OCI-LY7 (cell line): ENCODE measurements at regions of chr14 and their contacts with region 1.

Region 1: GRCh38 chr14:65502676-65503124 is 90.2 kb downstream of the FUT8 start:
- DNase-seq: no peak
- H3K4me3 ChIP-seq: no peak overlapping the region
- H3K27ac ChIP-seq: no peak overlapping the region
- H3K4me1 ChIP-seq: peaks cover 23% of the 10 kb centered on the region
- CTCF ChIP-seq: no peak

Region 2: DNA sequence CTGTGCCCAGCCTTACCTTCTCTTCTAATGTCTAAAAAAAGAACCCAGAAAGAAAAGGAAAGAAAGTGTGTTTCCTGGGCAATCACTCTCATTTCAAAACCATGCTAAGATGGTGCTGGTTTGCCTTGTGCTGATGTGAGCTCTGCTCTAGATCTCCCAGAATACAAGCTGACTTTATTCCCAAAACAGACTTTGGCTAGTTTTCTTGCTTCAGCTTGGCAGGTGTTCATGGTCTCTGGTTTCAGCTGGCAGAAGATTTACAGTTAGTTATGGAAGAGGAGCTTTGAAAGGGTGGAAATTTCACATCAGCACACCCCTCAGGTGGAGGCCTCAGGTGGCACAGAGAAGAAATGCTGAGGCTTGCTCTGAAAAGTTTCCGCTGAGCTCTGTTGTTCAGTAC is 918.5 kb before region 1 on chr14:
- CTCF ChIA-PET with region 1: no interaction called
- POLR2A ChIA-PET with region 1: no interaction called
- intact Hi-C with region 1: no loop called
- DNase-seq: no peak
- H3K4me3 ChIP-seq: no peak overlapping the region
- H3K27ac ChIP-seq: no peak overlapping the region
- H3K4me1 ChIP-seq: no peaks in the 10 kb centered on the region
- CTCF ChIP-seq: no peak

Region 3: GRCh38 chr14:65483647-65484046 is 19.1 kb before region 1 on chr14:
- CTCF ChIA-PET with region 1: no interaction called
- POLR2A ChIA-PET with region 1: interaction called, 12 read pairs
- intact Hi-C with region 1: no loop called
- DNase-seq: no peak
- H3K4me3 ChIP-seq: no peak overlapping the region
- H3K27ac ChIP-seq: no peak overlapping the region
- H3K4me1 ChIP-seq: peaks cover 52% of the 10 kb centered on the region
- CTCF ChIP-seq: no peak

Region 4: GRCh38 chr14:65492266-65492665 is 10.4 kb before region 1 on chr14:
- CTCF ChIA-PET with region 1: no interaction called
- POLR2A ChIA-PET with region 1: interaction called, 16 read pairs
- intact Hi-C with region 1: no loop called
- DNase-seq: peak; percentile 43
- H3K4me3 ChIP-seq: no peak overlapping the region
- H3K27ac ChIP-seq: no peak overlapping the region
- H3K4me1 ChIP-seq: peaks cover 34% of the 10 kb centered on the region
- CTCF ChIP-seq: no peak

Region 5: DNA sequence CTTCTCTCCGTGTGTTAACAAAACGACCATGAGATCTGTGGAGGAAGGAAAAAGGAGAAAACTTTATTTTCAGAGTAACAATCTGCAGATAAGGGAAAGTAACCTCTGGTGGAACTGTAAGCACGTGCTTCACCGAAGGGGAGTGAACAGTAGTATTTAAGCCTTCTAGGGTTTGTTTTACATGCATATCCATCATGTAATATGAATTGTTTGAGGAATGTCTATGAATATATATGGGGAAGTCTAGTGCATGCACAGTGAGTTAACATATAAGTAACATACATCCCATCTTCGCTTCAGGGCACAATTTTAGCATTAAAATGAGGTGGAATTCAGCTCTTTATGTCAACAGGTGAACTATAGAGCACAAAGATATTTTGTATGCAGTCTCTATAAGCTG is 11.0 kb after region 1 on chr14:
- CTCF ChIA-PET with region 1: no interaction called
- POLR2A ChIA-PET with region 1: interaction called, 10 read pairs
- intact Hi-C with region 1: no loop called
- DNase-seq: no peak
- H3K4me3 ChIP-seq: no peak overlapping the region
- H3K27ac ChIP-seq: no peak overlapping the region
- H3K4me1 ChIP-seq: no peaks in the 10 kb centered on the region
- CTCF ChIP-seq: no peak